ENCODE measurements at regions of chr11 and their contacts with region 1.

Region 1: GRCh38 chr11:48109046-48109666 is 107.5 kb upstream of the OR4B1 start:
- DNase-seq: peak; percentile 38
- CTCF ChIP-seq: peak; percentile 35

Region 2: GRCh38 chr11:47924184-47924691 is 184.9 kb before region 1 on chr11:
- CTCF ChIA-PET with region 1: interaction called, 178 read pairs
- POLR2A ChIA-PET with region 1: no interaction called
- DNase-seq: no peak
- CTCF ChIP-seq: no peak

Region 3: DNA sequence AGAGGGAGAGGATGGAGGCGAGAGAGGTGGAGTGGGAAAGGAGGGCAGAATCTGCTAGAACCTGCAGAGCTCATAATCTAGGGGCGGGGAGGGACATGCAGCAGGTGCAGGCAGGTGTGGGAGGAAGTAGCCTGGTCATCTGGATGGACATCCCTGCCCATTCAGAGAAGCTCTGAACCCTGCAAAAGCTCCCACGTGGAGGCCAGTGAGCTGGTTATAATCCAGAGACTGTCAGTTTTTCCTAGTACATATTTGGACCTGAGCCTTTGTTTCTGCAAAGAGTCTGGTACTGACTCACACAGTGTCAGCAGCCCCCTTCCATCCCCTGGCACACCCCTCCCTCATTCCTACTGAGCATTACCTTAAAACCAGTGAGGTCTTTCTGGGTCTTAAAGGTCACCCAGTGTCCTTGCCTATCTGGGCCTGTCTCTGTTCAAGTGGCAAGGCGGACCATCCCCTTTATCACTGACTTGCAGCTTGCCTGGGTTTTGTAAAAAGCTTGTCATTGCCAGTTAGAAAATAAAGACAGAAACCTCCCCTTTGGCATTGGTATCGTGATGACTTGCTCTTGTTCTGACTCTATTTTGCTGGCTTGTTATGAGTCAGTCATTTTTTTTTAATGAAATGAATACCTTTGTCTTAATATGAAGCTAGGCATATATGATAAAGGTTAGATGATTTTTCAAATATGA is 102.7 kb before region 1 on chr11:
- CTCF ChIA-PET with region 1: interaction called, 11 read pairs
- POLR2A ChIA-PET with region 1: no interaction called
- DNase-seq: peak; percentile 75
- CTCF ChIP-seq: no peak

Region 4: DNA sequence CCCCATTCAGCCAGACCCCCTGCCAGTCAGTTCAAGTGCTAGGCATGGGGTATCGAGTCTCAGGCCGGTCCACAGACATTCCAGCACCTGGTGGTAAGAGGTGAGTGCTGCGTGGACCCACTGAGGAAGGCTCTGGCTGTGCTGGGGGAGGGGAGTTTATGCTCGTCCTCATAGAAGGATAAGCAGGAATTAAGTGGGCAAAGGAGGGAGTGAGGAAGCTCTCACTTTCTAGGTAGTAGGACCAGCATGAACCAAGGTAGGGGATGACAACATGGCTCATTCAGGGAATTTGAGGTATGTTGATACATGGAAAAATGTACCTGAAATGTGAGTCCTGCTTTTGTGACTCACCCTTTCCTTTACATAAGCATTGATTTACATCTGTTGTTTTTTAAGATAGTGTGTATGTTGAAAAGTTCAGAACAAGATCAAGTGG is 12.1 kb before region 1 on chr11:
- CTCF ChIA-PET with region 1: interaction called, 10 read pairs
- POLR2A ChIA-PET with region 1: no interaction called
- DNase-seq: no peak
- CTCF ChIP-seq: no peak

Measured in GM10248 (cell line).